Transverse colon (tissue), 4 donors: ENCODE measurements at regions of chr16 and their contacts with region 1.

Region 1: DNA sequence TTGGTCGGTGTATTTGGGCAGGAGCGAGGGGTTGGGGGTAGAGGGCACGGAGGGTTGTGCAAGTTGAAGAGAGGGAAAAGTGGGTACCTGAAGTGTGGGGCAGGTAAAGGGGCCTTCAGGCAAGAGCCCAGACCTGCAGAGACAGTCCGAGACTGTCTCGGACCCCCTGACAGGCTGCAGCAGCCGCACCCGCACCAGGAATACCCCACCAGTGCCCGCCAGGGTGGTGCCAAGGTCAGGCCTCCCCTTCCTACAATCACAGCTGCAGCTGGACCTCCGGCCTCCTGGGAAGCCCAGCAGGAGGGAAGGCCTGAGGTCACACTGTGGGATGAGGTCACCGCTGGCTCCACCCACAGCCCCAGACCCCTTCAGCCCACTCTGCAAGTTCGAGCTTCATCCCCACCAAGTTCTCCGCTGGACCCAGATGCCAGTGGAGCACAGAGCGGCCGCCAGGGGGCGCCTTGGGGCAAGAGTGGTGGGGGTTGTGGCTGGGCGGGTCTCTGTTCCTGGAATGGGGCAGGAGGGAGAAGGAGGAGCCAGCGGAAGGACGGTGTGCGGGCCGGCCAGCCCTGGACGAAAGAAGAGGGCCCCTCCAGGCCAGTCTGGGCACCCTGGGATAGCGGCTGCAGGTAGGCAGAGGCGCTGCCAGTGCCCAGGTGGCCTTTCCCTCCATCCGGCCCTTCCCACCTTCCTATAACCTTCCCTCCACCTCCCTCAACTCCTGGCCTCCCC is at the start of gene HSD3B7:
- DNase-seq: peak; percentile 93
- H3K4me3 ChIP-seq: peak within 1 kb of the TSS; percentile 13 to 54 (median 40)
- H3K27ac ChIP-seq: peak within 1 kb of the TSS; percentile 68 to 83 (median 75)
- H3K4me1 ChIP-seq: peaks cover 9 to 12% (median 10%) of the 10 kb centered on the region in 4 donors
- H3K27me3 ChIP-seq: no peaks in the 10 kb centered on the region
- CTCF ChIP-seq: peak; percentile 92 to 98 (median 94)
- EP300 ChIP-seq: no peak
- POLR2A ChIP-seq: peak; percentile 42
- total RNA-seq, gene HSD3B7: 7.0 to 31.8 (median 29.6) TPM

Region 2: GRCh38 chr16:31142109-31143010 is 157.5 kb after region 1 on chr16:
- in situ Hi-C with region 1: no loop called
- intact Hi-C with region 1: loop called (anchors 5 kb)
- DNase-seq: peak; percentile 99
- H3K4me3 ChIP-seq: peak overlapping the region in 3 of 4 donors; percentile 42 to 49 (median 45)
- H3K27ac ChIP-seq: peak overlapping the region; percentile 81 to 90 (median 88)
- H3K4me1 ChIP-seq: peaks cover 9 to 44% (median 30%) of the 10 kb centered on the region in 4 donors
- H3K27me3 ChIP-seq: peaks cover 5% of the 10 kb centered on the region
- CTCF ChIP-seq: peak; percentile 81 to 99 (median 97)
- EP300 ChIP-seq: peak; percentile 49
- POLR2A ChIP-seq: peak; percentile 46

Region 3: DNA sequence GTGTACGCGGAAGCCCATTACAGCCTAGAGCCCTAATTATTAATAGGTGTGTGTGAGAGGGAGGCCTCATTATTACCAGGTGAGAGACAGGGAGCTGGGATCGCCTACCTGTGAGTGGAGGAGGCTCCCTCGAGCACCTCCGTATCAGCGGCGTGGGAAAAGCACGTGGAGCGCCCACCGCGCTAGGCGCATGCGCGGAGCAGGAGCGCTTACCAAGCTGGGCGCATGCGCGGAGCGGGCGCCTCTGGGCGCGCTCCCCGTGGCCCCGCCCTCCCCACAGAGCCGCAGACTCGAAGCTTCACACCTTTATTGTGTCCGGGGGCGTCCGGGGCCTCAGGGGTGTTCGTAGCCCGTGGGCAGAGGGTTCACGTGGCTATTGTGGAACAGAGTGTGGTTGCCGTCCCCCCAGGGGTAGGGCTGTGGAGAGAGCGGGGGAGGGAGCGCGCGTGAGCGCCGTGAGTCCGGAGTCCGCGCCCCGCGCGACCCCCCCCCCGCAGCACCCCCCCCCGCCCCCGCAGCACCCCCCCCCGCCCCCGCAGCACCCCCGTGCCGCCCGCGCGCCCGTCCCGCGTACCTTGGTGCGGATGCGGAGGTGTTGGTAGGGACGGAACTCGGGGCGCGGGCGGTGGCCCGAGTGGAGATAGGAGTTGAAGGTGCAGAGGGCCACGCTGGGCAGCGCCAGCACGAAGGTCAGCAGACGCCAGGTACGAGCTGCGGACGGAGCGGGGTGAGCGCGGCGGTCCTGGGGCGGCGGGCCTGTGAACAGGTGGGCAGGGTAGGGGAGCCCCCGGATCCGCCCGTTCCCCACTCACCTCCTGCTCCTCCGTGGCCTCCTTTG is 442.8 kb after region 1 on chr16:
- in situ Hi-C with region 1: loop called in 2 of 4 experiments (anchors 25 kb)
- intact Hi-C with region 1: no loop called
- DNase-seq: peak; percentile 45
- H3K4me3 ChIP-seq: peak overlapping the region in 3 of 4 donors; percentile 15 to 42 (median 18)
- H3K27ac ChIP-seq: no peak overlapping the region
- H3K4me1 ChIP-seq: peaks cover 0 to 5% (median 3%) of the 10 kb centered on the region in 4 donors
- H3K27me3 ChIP-seq: no peaks in the 10 kb centered on the region
- CTCF ChIP-seq: no peak
- EP300 ChIP-seq: no peak
- POLR2A ChIP-seq: no peak

Region 4: GRCh38 chr16:31868691-31869167 is 883.9 kb after region 1 on chr16:
- in situ Hi-C with region 1: loop called in 3 of 4 experiments (anchors 10 to 25 kb)
- intact Hi-C with region 1: no loop called
- DNase-seq: peak; percentile 87
- H3K4me3 ChIP-seq: no peak overlapping the region
- H3K27ac ChIP-seq: peak overlapping the region; percentile 24 to 60 (median 43)
- H3K4me1 ChIP-seq: peaks cover 3 to 9% (median 5%) of the 10 kb centered on the region in 4 donors
- H3K27me3 ChIP-seq: no peaks in the 10 kb centered on the region
- CTCF ChIP-seq: peak; percentile 78 to 82 (median 79)
- EP300 ChIP-seq: no peak
- POLR2A ChIP-seq: no peak